Common myeloid progenitor, CD34-positive (primary cell): ENCODE measurements at regions of chr5 and their contacts with region 1.

Region 1: DNA sequence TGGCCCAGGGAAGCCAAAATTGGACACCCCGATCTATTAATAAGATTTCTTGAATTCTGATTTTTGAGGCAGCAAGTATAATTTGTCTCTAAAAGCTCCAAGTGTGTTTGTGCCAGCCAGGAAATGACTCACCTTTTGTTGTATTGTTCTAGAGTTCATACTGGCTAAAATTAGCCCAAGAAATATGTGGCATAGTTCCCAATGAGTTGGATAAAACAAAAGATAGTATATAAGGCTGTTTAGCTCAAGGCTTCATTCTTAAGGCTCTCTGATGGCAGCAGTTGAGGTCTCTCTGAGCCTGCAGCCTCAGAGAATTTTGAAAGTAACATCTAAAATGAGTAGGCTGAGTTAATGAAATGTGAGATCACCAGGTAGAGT is 21.6 kb downstream of the HMGXB3 start:
- DNase-seq: peak in 2 of 3 donors; percentile 34 to 48
- H3K4me3 ChIP-seq: peak overlapping the region in 2 of 7 experiments; percentile 9 to 15
- H3K27ac ChIP-seq: no peak overlapping the region
- H3K4me1 ChIP-seq: peaks cover 0 to 8% (median 6%) of the 10 kb centered on the region in 4 experiments
- H3K27me3 ChIP-seq: no peaks in the 10 kb centered on the region

Region 2: DNA sequence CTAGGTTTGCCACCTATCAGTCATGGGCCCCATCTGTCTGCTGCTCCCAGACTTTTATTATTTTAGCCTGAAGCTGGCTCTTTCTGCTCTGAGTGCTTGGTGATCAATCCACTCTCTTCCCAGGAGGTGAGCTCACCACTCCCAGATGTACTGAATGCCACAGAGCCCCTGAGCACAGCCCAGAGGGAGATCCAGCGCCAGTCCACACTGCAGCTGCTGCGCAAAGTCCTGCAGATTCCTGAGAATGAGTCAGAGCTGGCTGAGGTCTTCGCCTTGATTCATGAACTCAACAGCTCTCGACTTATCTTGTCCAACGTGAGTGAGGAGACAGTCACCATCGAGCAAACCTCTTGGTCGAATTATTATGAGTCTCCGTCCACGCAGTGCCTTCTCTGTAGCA is 14.4 kb after region 1 on chr5:
- CTCF ChIA-PET with region 1: interaction called, 11 read pairs
- POLR2A ChIA-PET with region 1: no interaction called
- DNase-seq: no peak
- H3K4me3 ChIP-seq: no peak overlapping the region
- H3K27ac ChIP-seq: no peak overlapping the region
- H3K4me1 ChIP-seq: no peaks in the 10 kb centered on the region
- H3K27me3 ChIP-seq: no peaks in the 10 kb centered on the region